Breast epithelium (tissue), 4 donors: ENCODE measurements at regions of chr13 and their contacts with region 1.

Region 1: DNA sequence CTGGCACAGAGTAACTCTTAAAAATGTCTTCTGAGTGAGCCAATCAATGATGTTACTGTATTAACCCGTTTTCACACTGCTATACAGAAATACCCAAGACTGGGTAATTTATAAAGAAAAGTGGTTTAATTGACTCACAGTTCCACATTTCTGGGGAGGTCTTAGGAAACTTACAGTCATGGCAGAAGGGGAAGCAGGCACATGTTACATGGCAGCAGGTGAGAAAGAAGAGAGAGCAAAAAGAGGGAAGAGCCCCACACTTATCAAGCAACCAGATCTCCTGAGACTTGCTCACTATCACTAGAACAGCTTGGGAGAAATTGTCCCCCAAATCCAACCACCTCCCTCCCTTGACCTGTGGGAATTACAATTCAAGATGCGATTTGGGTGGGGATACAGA is 97.6 kb upstream of the MIR17HG start:
- DNase-seq: no peak
- H3K4me3 ChIP-seq: no peak overlapping the region
- H3K27ac ChIP-seq: no peak overlapping the region
- H3K4me1 ChIP-seq: no peaks in the 10 kb centered on the region
- H3K27me3 ChIP-seq: no peaks in the 10 kb centered on the region
- CTCF ChIP-seq: no peak
- POLR2A ChIP-seq: no peak

Region 2: DNA sequence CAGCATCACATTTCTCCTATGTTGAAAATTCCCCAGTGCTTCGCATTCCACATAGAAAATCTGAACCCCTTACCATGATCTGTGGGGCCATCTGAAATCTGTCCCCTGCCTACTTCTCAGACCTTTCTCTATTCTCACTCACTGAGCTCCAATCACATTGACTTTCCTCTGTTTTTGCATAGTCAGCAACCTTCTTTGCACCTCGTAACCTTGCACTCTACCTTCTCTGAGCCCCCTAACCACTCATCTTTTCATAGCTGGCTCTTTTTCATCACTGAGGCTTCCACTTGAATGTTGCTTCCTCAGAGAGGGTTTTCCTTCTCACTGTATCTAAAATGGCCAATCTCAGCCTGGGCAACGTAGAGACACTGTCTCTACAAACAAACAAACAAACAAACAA is 434.9 kb after region 1 on chr13:
- intact Hi-C with region 1: loop called (anchors 5 kb)
- DNase-seq: no peak
- H3K4me3 ChIP-seq: no peak overlapping the region
- H3K27ac ChIP-seq: no peak overlapping the region
- H3K4me1 ChIP-seq: no peaks in the 10 kb centered on the region
- H3K27me3 ChIP-seq: no peaks in the 10 kb centered on the region
- CTCF ChIP-seq: no peak
- POLR2A ChIP-seq: no peak